Common myeloid progenitor, CD34-positive (primary cell): ENCODE measurements at regions of chr3 and their contacts with region 1.

Region 1: GRCh38 chr3:13648060-13649001 is 99.4 kb downstream of the FBLN2 start:
- DNase-seq: peak; percentile 74 to 80 (median 77)
- H3K4me3 ChIP-seq: peak overlapping the region in 5 of 7 experiments; percentile 10 to 60 (median 46)
- H3K27ac ChIP-seq: no peak overlapping the region
- H3K4me1 ChIP-seq: peaks cover 0 to 35% (median 30%) of the 10 kb centered on the region in 4 experiments
- H3K27me3 ChIP-seq: peaks cover 0 to 3% (median 0%) of the 10 kb centered on the region in 5 experiments

Region 2: DNA sequence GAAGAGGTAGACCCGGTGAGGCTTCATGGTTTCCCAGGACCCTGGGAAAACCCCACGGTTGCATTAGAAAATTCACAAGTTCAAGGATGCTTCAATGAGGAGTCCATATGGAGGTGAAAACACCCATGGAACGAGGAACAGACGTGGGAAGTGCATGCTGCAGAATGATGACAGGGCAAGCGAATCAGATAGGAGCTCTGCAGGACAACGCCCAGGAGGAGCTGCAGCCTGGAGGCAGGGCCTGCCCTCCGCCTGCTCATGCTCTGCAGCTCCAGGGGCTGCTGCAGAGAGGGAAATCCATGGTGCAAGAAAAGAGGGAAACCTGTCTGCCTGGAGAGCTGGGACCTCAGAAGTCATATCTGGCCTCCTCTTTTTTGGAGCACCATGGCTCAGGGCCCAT is 289.7 kb before region 1 on chr3:
- CTCF ChIA-PET with region 1: no interaction called
- POLR2A ChIA-PET with region 1: no interaction called
- DNase-seq: no peak
- H3K4me3 ChIP-seq: no peak overlapping the region
- H3K27ac ChIP-seq: no peak overlapping the region
- H3K4me1 ChIP-seq: peaks cover 0 to 17% (median 10%) of the 10 kb centered on the region in 4 experiments
- H3K27me3 ChIP-seq: no peaks in the 10 kb centered on the region

Region 3: GRCh38 chr3:13461169-13462158 is 186.9 kb before region 1 on chr3:
- CTCF ChIA-PET with region 1: interaction called, 16 read pairs
- POLR2A ChIA-PET with region 1: no interaction called
- DNase-seq: peak; percentile 69 to 86 (median 82)
- H3K4me3 ChIP-seq: no peak overlapping the region
- H3K27ac ChIP-seq: no peak overlapping the region
- H3K4me1 ChIP-seq: no peaks in the 10 kb centered on the region
- H3K27me3 ChIP-seq: peaks cover 0 to 4% (median 0%) of the 10 kb centered on the region in 5 experiments

Region 4: DNA sequence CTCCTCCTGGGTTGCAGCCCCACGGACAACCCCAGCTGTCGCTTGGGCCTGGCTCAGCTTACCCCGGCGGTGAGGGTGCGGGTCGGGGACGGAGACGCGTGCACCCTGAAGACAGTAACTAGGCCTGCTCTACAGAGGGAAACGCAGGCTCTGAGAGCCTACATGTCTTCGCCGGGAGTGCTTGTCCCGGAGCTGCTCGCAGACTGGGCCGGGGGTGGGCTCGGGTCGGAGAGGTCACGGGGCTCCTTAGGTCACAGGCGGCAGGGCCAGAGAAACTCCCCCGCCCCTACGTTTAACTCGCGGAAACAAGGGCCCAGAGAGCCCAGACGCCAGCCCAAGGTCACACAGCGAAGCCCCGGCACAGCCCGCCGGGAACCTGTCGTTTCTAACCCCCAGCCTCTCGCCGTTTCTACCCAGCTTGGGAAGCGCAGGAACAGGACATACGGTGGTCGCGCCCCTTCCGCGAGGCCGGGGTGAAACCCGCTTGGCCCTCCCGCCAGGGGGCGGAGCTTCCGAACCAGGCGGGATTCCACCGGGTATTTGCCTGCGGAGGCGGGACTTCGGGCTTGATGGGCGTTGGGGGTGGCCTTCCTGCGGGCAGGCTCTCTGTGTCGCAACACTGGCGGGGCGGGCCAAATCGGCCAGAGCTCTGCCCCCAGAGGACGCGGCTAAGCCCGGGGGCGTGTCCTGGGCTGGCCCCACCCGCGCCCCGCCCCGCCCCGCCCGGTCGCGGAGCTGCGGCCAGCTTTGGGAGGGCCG is 168.6 kb before region 1 on chr3 and contains the start of gene HDAC11:
- CTCF ChIA-PET with region 1: interaction called, 70 read pairs
- POLR2A ChIA-PET with region 1: no interaction called
- DNase-seq: peak; percentile 96 to 97 (median 97)
- H3K4me3 ChIP-seq: peak within 1 kb of the TSS; percentile 43 to 94 (median 80)
- H3K27ac ChIP-seq: peak within 1 kb of the TSS; percentile 61 to 80
- H3K4me1 ChIP-seq: peaks cover 0 to 32% (median 20%) of the 10 kb centered on the region in 4 experiments
- H3K27me3 ChIP-seq: peaks cover 0 to 3% (median 0%) of the 10 kb centered on the region in 5 experiments

Region 5: GRCh38 chr3:13495921-13496723 is 152.2 kb before region 1 on chr3:
- CTCF ChIA-PET with region 1: interaction called, 422 read pairs
- POLR2A ChIA-PET with region 1: interaction called, 3 read pairs
- DNase-seq: peak; percentile 72 to 86 (median 80)
- H3K4me3 ChIP-seq: no peak overlapping the region
- H3K27ac ChIP-seq: no peak overlapping the region
- H3K4me1 ChIP-seq: peaks cover 0 to 8% (median 4%) of the 10 kb centered on the region in 4 experiments
- H3K27me3 ChIP-seq: no peaks in the 10 kb centered on the region

Region 6: GRCh38 chr3:13574798-13575451 is 73.4 kb before region 1 on chr3:
- CTCF ChIA-PET with region 1: interaction called, 25 read pairs
- POLR2A ChIA-PET with region 1: no interaction called
- DNase-seq: peak in 2 of 3 donors; percentile 42 to 55
- H3K4me3 ChIP-seq: no peak overlapping the region
- H3K27ac ChIP-seq: no peak overlapping the region
- H3K4me1 ChIP-seq: peaks cover 0 to 39% (median 27%) of the 10 kb centered on the region in 4 experiments
- H3K27me3 ChIP-seq: no peaks in the 10 kb centered on the region

Region 7: GRCh38 chr3:13637311-13637891 is 10.9 kb before region 1 on chr3:
- CTCF ChIA-PET with region 1: interaction called, 56 read pairs
- POLR2A ChIA-PET with region 1: interaction called, 3 read pairs
- DNase-seq: no peak
- H3K4me3 ChIP-seq: no peak overlapping the region
- H3K27ac ChIP-seq: no peak overlapping the region
- H3K4me1 ChIP-seq: peaks cover 0 to 4% (median 0%) of the 10 kb centered on the region in 4 experiments
- H3K27me3 ChIP-seq: no peaks in the 10 kb centered on the region

Region 8: GRCh38 chr3:13687517-13687943 is 39.2 kb after region 1 on chr3:
- CTCF ChIA-PET with region 1: no interaction called
- POLR2A ChIA-PET with region 1: no interaction called
- DNase-seq: no peak
- H3K4me3 ChIP-seq: no peak overlapping the region
- H3K27ac ChIP-seq: no peak overlapping the region
- H3K4me1 ChIP-seq: no peaks in the 10 kb centered on the region
- H3K27me3 ChIP-seq: peaks cover 0 to 10% (median 0%) of the 10 kb centered on the region in 5 experiments

Region 9: GRCh38 chr3:13782501-13782900 is 134.2 kb after region 1 on chr3:
- CTCF ChIA-PET with region 1: no interaction called
- POLR2A ChIA-PET with region 1: no interaction called
- DNase-seq: peak in 2 of 3 donors; percentile 9 to 24
- H3K4me3 ChIP-seq: peak overlapping the region in 1 of 7 experiments; percentile 51
- H3K27ac ChIP-seq: no peak overlapping the region
- H3K4me1 ChIP-seq: peaks cover 0 to 10% (median 5%) of the 10 kb centered on the region in 4 experiments
- H3K27me3 ChIP-seq: peaks cover 0 to 7% (median 0%) of the 10 kb centered on the region in 5 experiments

Region 10: DNA sequence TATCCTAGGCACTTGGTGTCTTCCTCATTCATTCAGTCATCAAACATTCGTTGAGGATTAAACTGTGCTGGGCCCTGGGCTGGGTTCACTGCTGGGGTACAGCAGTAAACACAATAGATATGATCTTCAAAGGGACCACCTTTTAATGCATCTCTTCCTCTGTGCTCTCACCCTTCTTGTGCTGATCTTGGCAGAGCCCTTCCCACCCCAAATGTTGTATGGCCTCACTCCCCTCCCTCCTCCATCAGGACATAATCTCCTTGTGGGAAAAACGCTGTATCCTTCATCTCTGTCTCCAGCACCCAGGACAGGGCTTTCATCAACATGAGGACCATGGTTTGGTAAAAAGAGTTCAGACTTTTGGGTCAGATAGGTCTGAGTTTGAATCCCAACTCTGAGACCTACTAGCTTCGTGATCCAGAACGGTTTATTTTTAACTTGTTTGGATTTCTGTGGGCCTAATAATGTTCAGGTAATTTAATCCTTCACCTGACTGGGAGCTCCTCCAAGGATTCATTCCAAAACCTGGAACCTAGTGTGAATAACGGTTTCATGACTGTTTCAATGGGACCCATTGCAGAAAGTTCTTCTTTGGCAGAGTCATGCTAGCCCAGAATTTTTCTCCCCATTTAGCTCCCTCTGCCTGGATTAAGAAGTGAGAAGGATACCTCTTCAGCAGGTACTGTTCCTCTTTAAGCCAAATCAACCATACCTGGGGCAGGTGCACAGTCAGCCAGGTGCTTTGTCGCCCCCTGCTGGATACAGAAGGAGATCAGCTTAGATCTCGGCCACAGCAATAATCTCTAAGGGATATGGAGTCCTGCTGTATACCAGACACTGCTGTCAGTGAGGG is 236.7 kb after region 1 on chr3:
- CTCF ChIA-PET with region 1: interaction called, 338 read pairs
- POLR2A ChIA-PET with region 1: no interaction called
- DNase-seq: peak; percentile 41 to 62 (median 61)
- H3K4me3 ChIP-seq: no peak overlapping the region
- H3K27ac ChIP-seq: no peak overlapping the region
- H3K4me1 ChIP-seq: peaks cover 0 to 15% (median 10%) of the 10 kb centered on the region in 4 experiments
- H3K27me3 ChIP-seq: peaks cover 2 to 41% (median 16%) of the 10 kb centered on the region in 5 experiments